RWPE1 (cell line): ENCODE measurements at regions of chr19 and their contacts with region 1.

Region 1: GRCh38 chr19:7522072-7522922 is at the start of gene MCOLN1:
- DNase-seq: peak; percentile 100
- H3K27ac ChIP-seq: peak within 1 kb of the TSS; percentile 75
- CTCF ChIP-seq: no peak

Region 2: GRCh38 chr19:7482584-7483439 is 39.5 kb before region 1 on chr19:
- CTCF ChIA-PET with region 1: no interaction called
- POLR2A ChIA-PET with region 1: interaction called, 13 read pairs
- DNase-seq: peak; percentile 81
- H3K27ac ChIP-seq: peak overlapping the region; percentile 74
- CTCF ChIP-seq: no peak

Region 3: GRCh38 chr19:7533925-7534480 is 11.7 kb after region 1 on chr19:
- CTCF ChIA-PET with region 1: no interaction called
- POLR2A ChIA-PET with region 1: interaction called, 11 read pairs
- DNase-seq: peak; percentile 76
- H3K27ac ChIP-seq: peak overlapping the region; percentile 84
- CTCF ChIP-seq: no peak